Ascending aorta (tissue), 2 donors: ENCODE measurements at regions of chr17 and their contacts with region 1.

Region 1: DNA sequence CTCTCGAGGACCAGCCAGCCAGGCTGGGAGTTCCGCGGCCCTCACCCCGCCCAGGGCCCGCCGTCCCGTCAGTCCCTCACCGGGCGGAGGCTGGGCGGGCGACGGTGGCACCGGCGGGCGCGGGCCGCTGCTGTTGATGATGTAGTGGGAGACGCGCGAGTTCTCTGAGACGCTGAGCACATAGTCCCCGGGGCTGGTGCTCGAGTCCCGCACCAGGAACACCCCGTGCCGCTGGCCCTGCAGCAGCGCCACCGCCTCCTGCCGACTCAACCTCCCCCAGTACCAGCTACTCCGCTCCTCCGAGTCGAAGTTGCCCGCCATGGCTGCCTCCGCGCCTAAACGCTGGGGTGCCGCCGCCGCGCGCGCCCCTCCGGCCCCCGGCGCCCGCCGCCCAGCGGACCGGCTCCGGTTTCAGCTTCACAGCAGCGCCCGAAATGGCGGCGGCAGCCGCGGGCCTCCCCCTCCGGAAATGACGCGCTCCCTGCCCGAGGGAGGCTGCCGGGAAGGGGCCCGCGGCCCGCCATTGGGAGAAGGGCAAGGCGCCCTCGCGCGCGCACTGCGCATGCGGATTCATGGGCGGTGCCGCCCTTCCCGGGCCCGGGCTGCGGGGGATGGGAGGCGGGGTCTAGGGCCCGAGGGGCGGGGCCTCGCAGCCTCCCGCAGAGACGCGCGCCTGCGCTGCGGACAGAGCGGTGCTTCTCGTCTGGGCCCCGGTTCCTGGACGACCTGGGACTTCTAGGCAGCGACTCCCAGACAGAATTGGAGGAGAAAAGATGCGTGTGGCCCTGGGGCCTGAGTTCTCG is at the start of gene CRK:
- DNase-seq: peak; percentile 77 to 98
- H3K4me3 ChIP-seq: peak within 1 kb of the TSS; percentile 75 to 99
- H3K27ac ChIP-seq: peak within 1 kb of the TSS; percentile 88 to 99
- H3K4me1 ChIP-seq: peaks cover 16 to 39% of the 10 kb centered on the region in 2 donors
- H3K27me3 ChIP-seq: no peaks in the 10 kb centered on the region
- CTCF ChIP-seq: no peak
- total RNA-seq, gene CRK: 83.4 TPM

Region 2: DNA sequence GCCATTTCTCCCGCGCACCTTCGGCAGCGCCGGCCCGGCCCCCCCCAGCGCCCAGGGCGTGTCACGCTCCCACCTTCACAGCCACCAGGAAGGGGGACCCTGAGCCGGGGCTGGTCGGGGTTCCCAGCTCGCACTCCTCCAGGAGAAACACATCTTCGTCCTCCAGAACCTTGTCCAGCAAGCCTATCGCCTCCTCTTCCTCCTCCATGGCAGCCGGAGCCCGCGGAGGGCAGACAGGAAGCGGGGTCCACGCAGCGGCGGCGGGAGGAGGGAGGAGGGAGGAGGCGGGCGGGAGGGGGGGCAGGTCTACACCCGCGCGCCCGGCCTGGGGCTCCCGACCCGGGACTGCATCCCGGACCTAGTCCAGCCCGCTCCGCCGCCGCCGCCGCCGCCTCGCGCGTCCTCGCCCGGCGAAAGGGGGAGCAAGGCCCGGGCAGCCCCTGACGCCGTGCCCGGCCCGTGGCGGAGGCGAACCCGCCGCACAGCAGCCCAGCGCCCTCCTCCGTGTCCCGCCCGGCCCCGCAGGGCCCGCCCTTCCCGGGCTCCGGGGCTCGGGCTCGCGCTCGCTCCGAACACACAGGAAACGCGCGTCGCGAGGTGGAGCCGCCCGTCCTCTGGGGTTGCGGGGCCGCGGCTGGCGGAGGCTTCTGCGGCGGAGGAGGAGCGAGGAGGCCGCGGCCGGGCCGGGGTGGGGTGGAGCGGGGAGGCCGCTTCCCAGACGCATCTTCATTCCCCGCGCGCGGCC is 347.0 kb before region 1 on chr17:
- intact Hi-C with region 1: no loop called
- DNase-seq: peak in 1 of 2 donors; percentile 76
- H3K4me3 ChIP-seq: peak overlapping the region; percentile 86
- H3K27ac ChIP-seq: peak overlapping the region; percentile 90 to 99
- H3K4me1 ChIP-seq: peaks cover 29 to 74% of the 10 kb centered on the region in 2 donors
- H3K27me3 ChIP-seq: no peaks in the 10 kb centered on the region
- CTCF ChIP-seq: no peak

Region 3: GRCh38 chr17:1286379-1287106 is 169.5 kb before region 1 on chr17:
- intact Hi-C with region 1: no loop called
- DNase-seq: no peak
- H3K4me3 ChIP-seq: no peak overlapping the region
- H3K27ac ChIP-seq: no peak overlapping the region
- H3K4me1 ChIP-seq: no peaks in the 10 kb centered on the region
- H3K27me3 ChIP-seq: no peaks in the 10 kb centered on the region
- CTCF ChIP-seq: no peak

Region 4: DNA sequence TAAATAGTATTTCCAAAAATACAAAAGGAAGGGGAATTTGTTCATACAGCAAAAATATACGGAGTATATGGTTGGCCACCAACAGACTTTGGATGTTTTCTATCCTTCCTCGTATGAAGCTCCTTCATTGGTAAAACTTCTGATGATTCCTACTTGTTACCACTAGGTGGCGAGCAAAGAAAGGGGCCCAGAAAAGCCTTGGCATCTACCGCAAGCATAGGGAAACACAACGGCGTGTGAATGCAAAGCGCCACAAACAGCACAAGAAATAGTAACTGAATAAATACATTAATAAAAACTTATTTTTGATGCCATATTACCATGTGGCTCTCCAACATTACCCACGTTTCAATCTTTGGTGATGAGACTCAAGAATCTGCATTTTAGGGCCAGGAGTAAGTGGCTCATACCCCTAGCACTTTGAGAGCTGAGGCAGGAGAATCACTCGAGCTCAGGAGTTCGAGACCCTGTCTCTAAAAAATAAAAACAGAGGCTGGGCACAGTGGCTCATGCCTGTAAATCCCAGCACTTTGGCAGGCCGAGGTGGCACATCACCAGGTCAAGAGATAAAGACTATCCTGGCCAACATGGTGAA is 90.5 kb before region 1 on chr17:
- intact Hi-C with region 1: loop called (anchors 2 kb)
- DNase-seq: peak in 1 of 2 donors; percentile 70
- H3K4me3 ChIP-seq: peak overlapping the region; percentile 14 to 24
- H3K27ac ChIP-seq: peak overlapping the region in 1 of 2 donors; percentile 32
- H3K4me1 ChIP-seq: peaks cover 12 to 57% of the 10 kb centered on the region in 2 donors
- H3K27me3 ChIP-seq: no peaks in the 10 kb centered on the region
- CTCF ChIP-seq: peak; percentile 78 to 84 (median 81)

Region 5: GRCh38 chr17:1399679-1400512 is 56.1 kb before region 1 on chr17 and contains the start of gene YWHAE:
- intact Hi-C with region 1: loop called (anchors 1 kb)
- DNase-seq: peak; percentile 91 to 98
- H3K4me3 ChIP-seq: peak within 1 kb of the TSS; percentile 72 to 85
- H3K27ac ChIP-seq: peak within 1 kb of the TSS; percentile 88 to 92
- H3K4me1 ChIP-seq: peaks cover 0 to 21% of the 10 kb centered on the region in 2 donors
- H3K27me3 ChIP-seq: no peaks in the 10 kb centered on the region
- CTCF ChIP-seq: peak in 1 of 3 experiments; percentile 4
- total RNA-seq, gene YWHAE: 261 TPM

Region 6: DNA sequence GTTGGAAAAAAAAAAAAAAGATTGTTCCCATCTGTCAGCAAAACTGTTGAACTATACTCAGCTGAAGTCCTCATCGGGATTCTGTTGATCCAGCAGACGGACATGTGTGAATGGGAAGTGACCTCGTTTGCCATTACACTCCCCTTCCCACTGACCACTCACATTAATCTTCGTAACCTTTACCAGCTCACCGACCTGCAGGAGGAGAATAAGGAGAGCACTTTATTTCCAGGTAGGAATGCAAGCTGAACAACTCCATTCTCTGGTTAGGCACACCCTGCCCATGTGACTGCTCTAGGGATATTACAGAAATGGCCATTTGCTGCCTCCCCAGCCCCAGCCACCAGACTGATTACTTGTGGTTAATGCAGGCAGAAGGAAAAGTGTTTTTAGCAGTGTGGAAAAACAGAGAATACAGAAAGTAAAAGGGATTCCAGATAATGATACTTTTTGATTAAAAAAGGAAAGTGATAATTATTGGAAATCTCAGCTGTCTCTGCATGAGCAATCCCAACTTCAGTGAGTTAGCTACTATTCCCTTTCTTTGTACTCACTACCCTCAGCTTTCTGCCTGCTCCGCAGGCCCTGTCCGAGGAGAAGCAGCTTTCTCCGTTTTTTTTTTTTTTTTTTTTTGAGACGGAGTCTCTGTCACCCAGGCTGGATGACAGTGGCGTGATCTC is 32.4 kb before region 1 on chr17:
- intact Hi-C with region 1: loop called (anchors 1 kb)
- DNase-seq: no peak
- H3K4me3 ChIP-seq: no peak overlapping the region
- H3K27ac ChIP-seq: peak overlapping the region; percentile 66 to 72
- H3K4me1 ChIP-seq: peaks cover 3 to 13% of the 10 kb centered on the region in 2 donors
- H3K27me3 ChIP-seq: no peaks in the 10 kb centered on the region
- CTCF ChIP-seq: no peak

Region 7: DNA sequence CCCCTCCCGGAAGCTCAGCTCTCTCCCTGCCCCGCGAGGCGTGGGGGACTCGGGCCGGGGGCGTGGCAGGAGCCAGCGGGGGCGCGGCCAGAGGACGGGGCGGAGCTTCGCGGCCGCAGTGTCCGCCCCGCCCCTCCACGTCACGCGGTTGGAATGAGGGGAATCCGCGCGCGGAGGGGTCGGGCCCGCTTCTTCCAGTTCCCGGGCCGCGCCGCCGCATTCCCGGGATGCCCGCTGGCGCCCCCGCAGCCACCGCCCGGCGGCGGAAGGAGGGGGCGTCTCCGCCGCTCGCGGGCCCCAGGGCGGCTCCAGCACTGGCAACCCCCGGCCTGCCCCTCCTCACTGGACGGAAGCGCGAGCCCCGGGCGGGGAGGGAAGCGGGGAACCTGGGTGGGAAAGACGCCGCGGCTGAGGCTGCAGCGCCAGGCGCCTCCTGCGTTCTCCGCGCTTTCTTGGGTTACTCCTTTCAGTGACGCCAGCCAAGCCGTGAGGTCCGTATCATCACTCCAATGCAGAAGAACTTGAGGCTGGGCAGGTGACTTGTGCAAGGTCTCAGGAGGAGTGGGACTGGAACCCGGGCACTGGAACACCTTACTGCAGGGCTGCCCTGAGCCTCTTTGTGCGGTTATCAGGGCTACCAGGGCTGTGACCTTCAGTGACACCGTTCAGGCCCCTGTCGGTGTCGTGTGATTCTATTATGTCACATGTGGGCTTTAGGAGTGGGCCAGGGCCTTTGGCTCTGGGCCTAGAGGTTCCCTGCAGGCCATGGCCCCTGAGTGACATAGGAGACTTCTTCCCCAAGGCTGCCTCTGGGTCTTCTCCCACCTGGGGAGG is 32.2 kb after region 1 on chr17:
- intact Hi-C with region 1: loop called (anchors 1 kb)
- DNase-seq: peak; percentile 33 to 95
- H3K4me3 ChIP-seq: peak overlapping the region; percentile 93 to 95
- H3K27ac ChIP-seq: peak overlapping the region; percentile 90 to 99
- H3K4me1 ChIP-seq: peaks cover 16 to 55% of the 10 kb centered on the region in 2 donors
- H3K27me3 ChIP-seq: no peaks in the 10 kb centered on the region
- CTCF ChIP-seq: peak in 1 of 3 experiments; percentile 5

Region 8: DNA sequence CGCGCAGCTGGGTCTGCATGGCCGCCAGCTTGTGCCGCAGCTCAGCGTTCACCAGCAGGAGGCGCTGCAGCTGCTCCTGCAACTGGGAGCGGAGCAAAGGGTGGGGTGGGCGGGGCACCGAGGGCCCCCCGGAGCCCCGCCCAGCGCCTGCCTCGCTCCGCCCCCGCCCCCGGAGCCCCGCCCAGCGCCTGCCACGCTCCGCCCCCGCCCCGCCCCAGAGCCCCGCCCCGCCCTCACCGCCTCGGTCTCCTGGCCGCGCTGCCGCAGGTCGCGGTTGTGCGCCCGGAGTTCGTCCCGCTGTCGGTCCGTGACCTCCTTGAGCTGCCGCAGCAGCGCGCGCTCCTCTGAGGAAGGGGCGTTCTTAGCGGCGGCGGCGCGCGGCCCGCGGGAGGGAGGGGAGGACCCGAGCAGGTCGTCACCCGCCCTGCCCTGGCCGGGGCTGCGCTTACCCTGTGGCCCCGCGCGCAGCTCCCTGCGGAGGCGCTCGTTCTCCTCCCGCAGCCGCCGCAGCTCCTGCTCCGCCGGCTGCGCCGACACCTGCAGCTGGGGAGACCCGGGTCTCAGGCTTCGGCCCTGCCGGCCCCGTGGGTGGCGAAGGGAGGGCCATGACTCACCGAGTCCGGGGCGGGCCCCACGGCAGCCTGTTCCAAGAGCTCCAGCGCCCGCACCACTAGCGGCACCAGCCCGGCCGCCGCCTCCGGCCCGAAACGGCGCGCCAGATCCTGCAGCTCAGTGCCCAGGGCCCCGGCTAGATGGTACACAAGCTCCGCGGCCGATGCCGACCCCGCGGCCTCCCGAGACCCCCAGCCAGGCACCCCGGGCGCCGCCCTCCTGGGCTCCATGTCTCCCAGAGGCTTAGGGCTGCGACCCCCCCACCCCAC is 193.2 kb after region 1 on chr17:
- intact Hi-C with region 1: loop called (anchors 1 kb)
- DNase-seq: peak; percentile 86 to 98
- H3K4me3 ChIP-seq: peak overlapping the region; percentile 74 to 92
- H3K27ac ChIP-seq: peak overlapping the region; percentile 94 to 99
- H3K4me1 ChIP-seq: peaks cover 4 to 22% of the 10 kb centered on the region in 2 donors
- H3K27me3 ChIP-seq: no peaks in the 10 kb centered on the region
- CTCF ChIP-seq: peak in 2 of 3 experiments; percentile 94 to 97

Region 9: GRCh38 chr17:2054512-2055291 is 598.7 kb after region 1 on chr17 and contains the start of gene HIC1:
- intact Hi-C with region 1: no loop called
- DNase-seq: peak in 1 of 2 donors; percentile 85
- H3K4me3 ChIP-seq: peak within 1 kb of the TSS; percentile 57 to 77
- H3K27ac ChIP-seq: peak within 1 kb of the TSS; percentile 71 to 77
- H3K4me1 ChIP-seq: peaks cover 27 to 29% of the 10 kb centered on the region in 2 donors
- H3K27me3 ChIP-seq: no peaks in the 10 kb centered on the region
- CTCF ChIP-seq: peak; percentile 71 to 97 (median 92)
- total RNA-seq, gene HIC1: 131 TPM